HEK293T (cell line): ENCODE measurements at regions of chr4 and their contacts with region 1.

Region 1: GRCh38 chr4:169582205-169582604 is 30.2 kb downstream of the NEK1 start:
- DNase-seq: no peak

Region 2: GRCh38 chr4:169523796-169524195 is 58.4 kb before region 1 on chr4:
- CTCF ChIA-PET with region 1: no interaction called
- POLR2A ChIA-PET with region 1: no interaction called
- DNase-seq: no peak

Region 3: DNA sequence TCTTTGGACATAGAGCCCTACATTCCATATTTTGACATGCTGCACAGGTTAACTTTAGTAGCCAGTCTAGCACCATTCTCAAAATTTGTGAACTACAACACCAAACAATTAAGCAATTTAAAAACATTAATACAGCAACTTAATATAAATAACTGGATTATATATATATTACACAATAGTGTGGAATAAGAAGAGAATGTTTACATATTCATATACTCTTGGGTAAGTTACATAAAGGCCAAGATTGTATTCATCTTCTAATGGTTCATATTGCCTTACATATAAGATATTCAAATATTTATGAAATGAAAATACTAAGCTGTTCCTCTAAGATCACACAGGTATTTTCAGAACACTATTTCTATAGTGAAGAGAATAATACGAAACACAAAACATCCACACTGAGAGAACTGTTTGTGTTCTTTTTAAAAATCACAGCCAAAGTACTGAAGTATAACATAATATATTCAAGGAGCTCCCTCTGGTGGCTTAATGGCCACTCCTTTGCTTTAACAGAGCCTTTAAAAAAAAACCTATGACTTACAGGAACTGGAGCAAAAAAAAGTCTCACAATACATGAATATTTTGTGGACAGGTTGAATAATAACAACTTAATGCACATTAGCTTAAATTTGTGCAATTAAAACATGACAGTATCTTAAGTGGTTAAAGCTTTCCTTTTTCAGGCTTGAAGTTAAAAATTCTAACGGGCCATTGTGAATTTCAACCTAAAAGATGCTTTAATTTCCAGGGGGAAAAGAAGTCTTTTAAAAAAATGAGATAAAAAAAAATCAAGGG is 16.0 kb before region 1 on chr4:
- CTCF ChIA-PET with region 1: interaction called, 12 read pairs
- POLR2A ChIA-PET with region 1: no interaction called
- DNase-seq: peak; percentile 25

Region 4: DNA sequence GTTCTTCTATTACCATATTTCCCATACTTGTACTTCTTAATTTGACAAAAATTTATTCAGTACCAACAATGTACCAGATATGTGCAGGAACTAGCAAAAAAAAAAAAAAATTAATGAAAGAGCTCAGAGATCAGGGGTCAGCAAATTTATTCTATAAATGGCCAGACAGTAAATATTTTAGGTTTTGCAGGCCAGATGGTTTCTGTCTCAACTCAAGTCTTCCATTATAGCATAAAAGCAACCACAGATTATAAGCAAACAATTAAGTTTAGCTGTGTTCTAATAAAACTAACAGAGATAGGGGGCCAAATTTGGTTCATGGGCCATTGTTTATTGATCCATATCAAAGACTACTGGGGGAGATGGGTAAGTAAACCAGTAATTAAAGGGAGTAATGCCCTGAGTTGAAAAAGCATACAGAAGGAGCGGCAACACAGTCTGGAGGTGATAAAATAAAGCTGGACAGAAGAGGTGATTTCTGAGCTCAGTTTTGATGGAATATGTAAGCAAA is 10.9 kb after region 1 on chr4:
- CTCF ChIA-PET with region 1: no interaction called
- POLR2A ChIA-PET with region 1: no interaction called
- DNase-seq: no peak